Body of pancreas (tissue), 4 donors: ENCODE measurements at regions of chr16 and their contacts with region 1.

Region 1: GRCh38 chr16:29230671-29231096 is 175.8 kb downstream of the NPIPB11 start:
- DNase-seq: no peak
- ATAC-seq: no peak
- H3K4me3 ChIP-seq: no peak overlapping the region
- H3K27ac ChIP-seq: no peak overlapping the region
- H3K4me1 ChIP-seq: peaks cover 7% of the 10 kb centered on the region
- H3K27me3 ChIP-seq: no peaks in the 10 kb centered on the region
- CTCF ChIP-seq: no peak
- POLR2A ChIP-seq: no peak

Region 2: GRCh38 chr16:28910086-28911031 is 320.3 kb before region 1 on chr16:
- intact Hi-C with region 1: no loop called
- DNase-seq: no peak
- ATAC-seq: no peak
- H3K4me3 ChIP-seq: no peak overlapping the region
- H3K27ac ChIP-seq: no peak overlapping the region
- H3K4me1 ChIP-seq: no peaks in the 10 kb centered on the region
- H3K27me3 ChIP-seq: no peaks in the 10 kb centered on the region
- CTCF ChIP-seq: no peak
- POLR2A ChIP-seq: no peak

Region 3: DNA sequence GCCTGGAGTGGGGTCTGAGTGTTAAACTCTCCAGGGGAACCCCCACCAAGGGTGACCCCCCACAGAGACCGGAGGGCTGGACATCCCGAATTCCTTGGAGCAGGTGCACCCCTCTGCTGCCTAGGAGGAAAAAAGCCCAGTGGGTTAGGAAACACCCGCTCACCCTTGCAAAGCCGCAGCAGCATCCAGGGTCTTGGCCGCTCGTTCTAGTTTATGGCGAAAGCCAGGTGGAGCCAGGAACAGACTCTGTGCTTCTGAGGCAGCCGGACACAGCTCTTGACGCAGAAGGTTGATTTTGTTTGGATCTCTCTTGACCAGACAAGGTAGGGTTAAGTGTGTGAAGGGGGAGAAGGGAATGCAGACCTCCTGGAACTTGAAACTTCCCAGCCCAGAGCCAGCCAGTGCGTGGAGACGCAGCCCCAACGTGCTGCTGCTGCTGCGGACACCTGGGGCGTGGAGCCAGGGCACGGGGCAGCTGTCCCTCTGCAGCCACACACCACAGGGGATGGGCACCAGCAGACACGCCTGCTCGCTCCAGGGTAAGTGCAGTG is 91.3 kb before region 1 on chr16:
- intact Hi-C with region 1: no loop called
- DNase-seq: no peak
- ATAC-seq: no peak
- H3K4me3 ChIP-seq: no peak overlapping the region
- H3K27ac ChIP-seq: no peak overlapping the region
- H3K4me1 ChIP-seq: no peaks in the 10 kb centered on the region
- H3K27me3 ChIP-seq: no peaks in the 10 kb centered on the region
- CTCF ChIP-seq: no peak
- POLR2A ChIP-seq: no peak

Region 4: DNA sequence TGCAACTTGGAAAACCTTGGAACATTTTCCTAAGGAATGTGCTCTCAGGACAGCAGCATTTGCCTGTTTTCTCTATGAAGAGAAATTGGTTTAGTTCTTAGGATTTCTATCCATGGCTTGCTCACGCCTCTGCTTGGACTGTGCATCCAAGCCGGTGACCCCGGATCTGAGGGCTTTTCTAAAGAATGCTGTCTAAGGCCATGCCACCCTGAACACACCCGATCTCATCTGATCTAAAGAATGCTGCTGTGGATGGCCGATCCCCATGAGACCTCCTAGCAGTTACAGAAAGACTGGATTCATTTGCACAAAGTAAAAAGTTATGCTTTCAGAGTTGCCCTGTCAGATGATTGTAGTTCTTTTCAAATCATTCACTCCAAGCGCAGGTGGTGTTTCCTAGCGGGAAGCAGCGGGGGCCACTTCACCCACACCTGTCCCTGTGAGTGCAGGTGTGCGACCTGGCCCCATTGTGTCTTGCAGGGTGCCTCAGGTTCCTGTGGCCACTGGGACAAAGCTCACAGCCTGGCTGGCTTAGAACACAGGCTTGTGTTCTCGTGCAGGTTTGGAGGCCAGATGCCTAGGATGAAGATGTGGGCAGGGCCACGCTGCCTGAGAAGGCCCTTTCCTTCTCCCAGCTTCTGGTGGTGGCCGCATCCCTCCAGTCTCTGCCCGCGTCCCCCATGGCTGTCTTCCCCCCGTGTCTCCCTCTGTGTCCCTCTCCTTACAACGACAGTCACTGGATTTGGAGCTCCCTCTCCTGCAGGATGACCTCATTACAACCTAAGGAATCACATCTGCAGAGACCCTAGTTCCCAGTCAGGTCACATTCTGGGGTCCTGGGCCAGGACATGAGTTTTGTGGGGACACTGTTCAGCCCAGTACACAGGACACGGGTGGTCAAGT is 85.2 kb after region 1 on chr16:
- intact Hi-C with region 1: loop called (anchors 10 kb)
- DNase-seq: no peak
- ATAC-seq: no peak
- H3K4me3 ChIP-seq: no peak overlapping the region
- H3K27ac ChIP-seq: peak overlapping the region in 1 of 4 donors; percentile 39
- H3K4me1 ChIP-seq: peaks cover 20% of the 10 kb centered on the region
- H3K27me3 ChIP-seq: no peaks in the 10 kb centered on the region
- CTCF ChIP-seq: peak in 4 of 7 experiments; percentile 25 to 40 (median 27)
- POLR2A ChIP-seq: no peak